OCI-LY7 (cell line): ENCODE measurements at regions of chr2 and their contacts with region 1.

Region 1: GRCh38 chr2:45729753-45730512 is 78.5 kb downstream of the PRKCE start:
- DNase-seq: peak; percentile 85
- H3K4me3 ChIP-seq: peak overlapping the region; percentile 27
- H3K27ac ChIP-seq: peak overlapping the region; percentile 92
- H3K4me1 ChIP-seq: peaks cover 68% of the 10 kb centered on the region
- CTCF ChIP-seq: peak; percentile 73

Region 2: DNA sequence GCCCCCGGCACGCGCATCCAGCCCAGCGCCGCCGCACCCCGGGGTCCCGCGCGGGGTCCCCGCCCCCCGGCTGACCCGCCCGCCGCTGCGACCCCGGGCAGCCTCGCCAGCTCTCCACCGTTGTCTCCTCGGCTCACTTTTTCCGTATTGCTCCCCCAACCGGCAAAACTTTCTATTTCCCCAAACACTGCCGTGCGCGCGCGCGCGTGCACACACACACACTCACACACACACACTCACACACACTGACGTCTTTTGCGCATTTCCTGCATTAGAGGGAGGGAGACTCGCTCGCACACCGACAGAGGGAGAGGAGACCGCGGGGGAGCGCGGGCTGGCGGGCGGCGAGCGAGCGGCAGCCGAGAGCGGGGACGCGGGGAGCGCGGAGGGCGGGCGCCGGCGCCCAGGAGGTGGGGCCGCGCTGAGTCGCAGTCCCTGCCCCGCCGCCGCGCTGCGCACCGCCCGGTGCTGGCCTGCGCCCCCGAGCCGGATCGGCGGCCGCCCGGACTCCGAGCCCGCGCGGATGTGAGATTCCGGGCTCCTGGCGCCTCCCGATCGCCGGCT is 79.0 kb before region 1 on chr2:
- CTCF ChIA-PET with region 1: interaction called, 5 read pairs
- POLR2A ChIA-PET with region 1: interaction called, 7 read pairs
- intact Hi-C with region 1: loop called (anchors 1 kb)
- DNase-seq: peak; percentile 97
- H3K4me3 ChIP-seq: peak overlapping the region; percentile 89
- H3K27ac ChIP-seq: peak overlapping the region; percentile 18
- H3K4me1 ChIP-seq: peaks cover 19% of the 10 kb centered on the region
- CTCF ChIP-seq: peak; percentile 62

Region 3: DNA sequence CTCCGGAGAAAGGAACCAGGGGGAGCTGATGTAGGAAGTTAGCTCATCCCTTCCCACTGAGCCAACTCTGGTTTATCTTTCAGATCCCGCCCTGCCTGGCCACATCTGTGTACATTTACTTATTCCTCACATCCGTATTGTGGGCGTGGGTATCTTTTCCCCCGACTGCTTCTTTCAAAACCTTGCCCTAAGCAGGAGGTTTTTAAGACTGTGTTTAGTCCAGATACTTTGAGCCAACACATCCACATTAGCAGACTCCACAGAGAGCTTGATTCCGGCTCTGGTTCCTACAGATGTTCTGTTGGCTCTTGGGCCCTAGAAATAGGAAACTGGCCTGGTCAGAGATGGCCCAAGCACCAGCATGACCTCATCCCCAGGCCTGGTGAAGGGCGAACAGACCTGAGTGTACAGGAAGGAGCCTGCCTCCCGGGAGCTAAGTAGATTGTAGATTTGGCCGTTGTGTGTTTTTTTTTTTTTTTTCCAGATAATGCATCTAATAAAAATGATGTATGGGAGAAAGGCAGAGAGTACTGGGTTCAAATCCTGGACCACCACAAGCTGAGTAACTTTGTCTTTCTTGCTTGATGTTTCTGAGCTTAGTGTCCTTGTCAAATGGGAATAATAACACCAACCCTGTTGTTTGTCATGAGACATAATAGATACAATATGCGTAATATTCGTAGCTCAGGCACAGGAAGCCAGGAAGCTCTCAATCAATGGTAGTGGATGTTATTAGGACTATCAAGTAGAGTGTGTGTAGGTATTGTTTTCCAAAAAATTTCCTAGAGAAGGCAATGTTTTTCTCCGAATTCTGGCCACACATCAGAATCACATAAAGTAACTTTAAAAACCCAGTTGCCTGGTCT is 13.8 kb after region 1 on chr2:
- CTCF ChIA-PET with region 1: interaction called, 17 read pairs
- POLR2A ChIA-PET with region 1: interaction called, 34 read pairs
- intact Hi-C with region 1: no loop called
- DNase-seq: no peak
- H3K4me3 ChIP-seq: no peak overlapping the region
- H3K27ac ChIP-seq: no peak overlapping the region
- H3K4me1 ChIP-seq: peaks cover 51% of the 10 kb centered on the region
- CTCF ChIP-seq: no peak

Region 4: GRCh38 chr2:45755585-45756335 is 25.8 kb after region 1 on chr2:
- CTCF ChIA-PET with region 1: no interaction called
- POLR2A ChIA-PET with region 1: no interaction called
- intact Hi-C with region 1: no loop called
- DNase-seq: no peak
- H3K4me3 ChIP-seq: no peak overlapping the region
- H3K27ac ChIP-seq: no peak overlapping the region
- H3K4me1 ChIP-seq: no peaks in the 10 kb centered on the region
- CTCF ChIP-seq: no peak

Region 5: DNA sequence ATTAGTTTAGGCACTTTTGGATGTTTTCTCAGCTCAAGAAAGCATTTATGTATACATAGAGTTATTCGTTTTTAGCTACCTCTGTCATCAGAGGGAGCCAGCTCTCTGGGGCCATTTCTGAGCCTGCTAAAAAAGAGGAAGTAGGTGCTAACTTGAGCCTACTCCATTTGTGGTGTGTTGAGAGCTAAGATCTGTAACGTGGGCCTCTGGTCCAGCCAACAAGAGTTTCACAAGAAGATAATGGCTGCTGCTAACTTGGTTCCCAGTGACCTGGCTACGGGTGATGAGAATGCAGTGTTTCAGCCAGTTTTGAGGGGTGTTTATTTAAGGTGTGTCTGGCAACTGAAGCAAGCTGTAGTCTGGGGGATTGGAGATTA is 104.0 kb after region 1 on chr2:
- CTCF ChIA-PET with region 1: no interaction called
- POLR2A ChIA-PET with region 1: interaction called, 33 read pairs
- intact Hi-C with region 1: loop called (anchors 1 kb)
- DNase-seq: peak; percentile 86
- H3K4me3 ChIP-seq: peak overlapping the region; percentile 32
- H3K27ac ChIP-seq: peak overlapping the region; percentile 83
- H3K4me1 ChIP-seq: peaks cover 57% of the 10 kb centered on the region
- CTCF ChIP-seq: no peak

Region 6: DNA sequence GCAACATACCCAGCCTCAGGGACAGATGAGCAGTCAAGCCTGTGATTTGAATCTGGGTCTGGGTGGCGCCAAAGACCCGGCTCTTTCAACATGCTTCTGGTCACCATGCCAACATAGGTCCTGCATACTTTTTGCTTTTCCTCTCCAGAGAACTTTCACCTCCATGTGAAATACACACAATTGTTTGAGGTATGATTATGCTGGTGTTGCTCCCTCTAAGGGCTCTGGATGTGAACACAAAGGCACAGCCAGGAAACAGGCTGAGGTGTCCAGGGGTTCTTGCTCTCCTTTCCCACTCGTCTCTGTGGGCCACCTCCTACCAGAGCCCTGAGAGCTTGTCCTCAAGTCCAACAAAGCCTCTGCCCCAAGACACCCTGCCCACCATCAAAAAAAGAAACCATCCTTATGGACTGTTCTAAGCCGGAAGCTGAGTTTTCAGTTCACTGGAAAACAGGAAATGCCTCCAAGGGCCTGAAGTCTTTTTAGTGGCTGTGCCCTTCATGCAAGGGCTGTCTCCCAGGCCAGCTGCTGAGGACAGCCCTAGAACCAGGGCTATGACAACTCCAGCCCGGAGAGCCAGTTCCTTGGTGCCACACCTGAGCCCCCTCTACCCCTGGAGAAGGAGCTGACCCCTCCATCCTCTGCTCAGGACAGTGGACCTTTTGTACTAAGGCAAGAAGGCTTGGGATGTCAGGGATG is 467.1 kb after region 1 on chr2:
- CTCF ChIA-PET with region 1: no interaction called
- POLR2A ChIA-PET with region 1: no interaction called
- intact Hi-C with region 1: no loop called
- DNase-seq: no peak
- H3K4me3 ChIP-seq: no peak overlapping the region
- H3K27ac ChIP-seq: no peak overlapping the region
- H3K4me1 ChIP-seq: no peaks in the 10 kb centered on the region
- CTCF ChIP-seq: no peak

Region 7: DNA sequence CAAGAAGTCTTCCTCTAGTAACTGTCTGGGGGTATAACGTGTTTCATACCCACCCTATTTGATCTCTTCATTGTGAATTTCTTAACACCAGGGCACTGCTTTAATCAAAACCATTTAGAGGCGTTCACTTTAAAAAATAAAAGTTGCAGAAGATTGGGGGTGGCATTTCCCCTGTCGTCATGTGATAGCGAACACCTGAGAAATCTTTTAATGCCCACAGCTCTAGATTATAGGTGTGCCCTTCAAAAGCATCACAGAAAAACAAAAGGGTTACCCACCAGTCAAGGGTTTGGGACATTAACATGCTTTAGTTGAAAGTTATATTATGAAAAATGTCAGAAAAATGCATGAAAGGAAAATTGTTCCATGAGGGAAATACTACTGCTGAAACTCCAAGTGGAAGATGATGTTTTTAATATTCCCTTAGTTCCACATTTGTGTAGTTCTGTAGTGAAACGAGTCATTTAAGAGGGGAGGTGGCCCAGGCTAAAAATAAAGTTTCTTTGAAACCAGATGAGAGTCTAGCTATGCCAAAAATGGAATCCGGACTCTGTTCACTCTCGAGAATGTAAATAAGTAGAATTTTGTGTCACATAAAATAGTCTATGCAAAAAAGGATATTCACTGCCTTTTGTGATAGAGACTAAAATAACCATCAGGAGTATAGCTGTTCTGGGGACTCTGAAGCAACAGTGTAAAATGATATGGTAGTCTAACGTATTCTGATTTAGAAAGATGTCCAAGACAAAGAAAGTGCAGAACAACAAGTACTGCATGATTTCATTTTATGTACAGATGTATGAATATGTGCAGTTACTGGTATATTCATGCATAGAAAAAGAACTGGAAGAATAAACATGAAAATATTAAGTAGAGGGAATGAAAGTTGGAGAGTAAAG is 844.8 kb after region 1 on chr2:
- CTCF ChIA-PET with region 1: no interaction called
- POLR2A ChIA-PET with region 1: interaction called, 4 read pairs
- intact Hi-C with region 1: loop called (anchors 10 kb)
- DNase-seq: peak; percentile 91
- H3K4me3 ChIP-seq: peak overlapping the region; percentile 57
- H3K27ac ChIP-seq: peak overlapping the region; percentile 100
- H3K4me1 ChIP-seq: peaks cover 82% of the 10 kb centered on the region
- CTCF ChIP-seq: no peak